Right cardiac atrium (tissue), 5 donors: ENCODE measurements at regions of chr1 and their contacts with region 1.

Region 1: GRCh38 chr1:245915406-245915805 is 591.7 kb downstream of the SMYD3 start:
- DNase-seq: no peak
- ATAC-seq: no peak
- H3K4me3 ChIP-seq: no peak overlapping the region
- H3K27ac ChIP-seq: no peak overlapping the region
- H3K4me1 ChIP-seq: peaks cover 4% of the 10 kb centered on the region
- H3K27me3 ChIP-seq: no peaks in the 10 kb centered on the region

Region 2: GRCh38 chr1:245765230-245766000 is 150.0 kb before region 1 on chr1:
- intact Hi-C with region 1: no loop called
- DNase-seq: no peak
- ATAC-seq: no peak
- H3K4me3 ChIP-seq: no peak overlapping the region
- H3K27ac ChIP-seq: no peak overlapping the region
- H3K4me1 ChIP-seq: no peaks in the 10 kb centered on the region
- H3K27me3 ChIP-seq: no peaks in the 10 kb centered on the region

Region 3: GRCh38 chr1:245978915-245979314 is 63.5 kb after region 1 on chr1:
- intact Hi-C with region 1: loop called in 1 of 4 experiments (anchors 10 kb)
- DNase-seq: no peak
- ATAC-seq: no peak
- H3K4me3 ChIP-seq: no peak overlapping the region
- H3K27ac ChIP-seq: no peak overlapping the region
- H3K4me1 ChIP-seq: no peaks in the 10 kb centered on the region
- H3K27me3 ChIP-seq: no peaks in the 10 kb centered on the region